PC-9 (cell line): ENCODE measurements at regions of chr7 and their contacts with region 1.

Region 1: DNA sequence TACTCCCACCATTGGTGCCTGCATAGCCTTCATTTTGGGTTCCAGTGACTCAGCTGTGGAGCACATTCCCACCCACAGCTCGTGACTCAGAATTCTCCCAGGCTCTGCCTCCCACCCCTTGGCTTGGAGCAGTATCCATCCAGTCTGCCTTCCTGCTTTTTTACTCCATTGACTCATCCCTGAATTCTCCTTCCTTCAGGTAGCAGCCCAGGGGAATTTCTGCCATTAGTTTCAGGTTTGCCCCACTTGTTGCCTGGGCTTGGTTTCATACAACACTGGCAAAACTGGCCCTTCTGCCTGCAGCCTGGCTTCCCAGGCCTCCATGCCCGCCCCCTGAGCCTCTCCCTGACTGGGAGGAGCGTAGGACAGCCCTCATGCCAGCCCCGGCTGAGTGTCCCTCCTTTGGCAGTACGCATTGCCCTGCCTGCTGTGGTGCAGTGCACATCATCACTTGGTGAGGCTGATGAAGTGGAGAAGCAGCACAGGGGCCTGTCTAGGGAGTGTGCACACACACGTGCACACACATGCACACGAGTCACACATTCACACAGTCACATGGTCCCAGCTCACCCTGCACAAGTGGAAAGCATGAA is 55.0 kb downstream of the SNX10 start:
- DNase-seq: peak; percentile 91 to 94
- H3K4me3 ChIP-seq: no peak overlapping the region
- H3K27ac ChIP-seq: peak overlapping the region; percentile 86
- H3K4me1 ChIP-seq: peaks cover 42% of the 10 kb centered on the region
- H3K27me3 ChIP-seq: no peaks in the 10 kb centered on the region
- CTCF ChIP-seq: no peak

Region 2: DNA sequence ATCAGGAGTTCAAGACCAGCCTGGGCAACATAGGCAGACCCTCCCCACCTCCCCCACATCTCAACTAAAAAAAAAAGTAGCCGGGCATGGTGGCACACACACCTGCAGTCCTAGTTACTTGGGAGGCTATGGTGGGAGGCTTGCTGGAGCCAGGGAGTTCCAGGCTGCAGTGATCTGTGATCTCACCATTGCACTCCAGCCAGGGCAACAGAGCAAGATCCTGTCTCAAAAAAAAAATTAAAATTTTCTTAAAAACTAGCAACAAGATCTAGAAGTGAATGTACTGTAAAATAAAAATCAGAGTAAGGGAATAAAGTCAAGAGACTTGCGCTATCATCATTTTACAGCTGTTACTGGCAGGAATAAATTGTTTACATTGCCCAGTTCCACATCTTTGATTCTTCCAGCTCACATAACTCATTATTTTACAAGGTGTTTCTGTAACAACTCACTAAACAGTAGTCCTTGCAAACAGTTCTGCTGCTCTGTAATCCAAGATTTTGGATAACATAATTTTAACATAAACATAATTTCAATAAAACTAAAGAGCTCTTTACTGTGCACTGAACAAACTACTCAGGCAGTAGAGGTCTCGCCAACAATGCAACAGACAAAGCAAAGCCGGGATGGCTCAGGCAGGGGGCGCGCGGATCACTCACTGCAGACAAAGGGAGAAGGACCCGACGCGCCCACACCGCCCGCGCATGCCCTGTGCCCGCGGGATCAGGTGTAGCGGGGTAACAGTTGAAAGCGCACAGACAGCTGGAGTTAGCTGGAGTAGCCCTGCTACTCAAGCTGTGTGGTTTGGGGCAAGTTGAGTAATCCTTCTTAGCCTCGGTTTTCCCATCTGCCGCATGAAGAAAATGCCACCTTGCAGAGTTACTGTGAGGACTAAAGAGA is 268.0 kb before region 1 on chr7:
- CTCF ChIA-PET with region 1: no interaction called
- POLR2A ChIA-PET with region 1: no interaction called
- intact Hi-C with region 1: loop called (anchors 5 kb)
- DNase-seq: peak in 1 of 2 experiments; percentile 51
- H3K4me3 ChIP-seq: no peak overlapping the region
- H3K27ac ChIP-seq: no peak overlapping the region
- H3K4me1 ChIP-seq: peaks cover 37% of the 10 kb centered on the region
- H3K27me3 ChIP-seq: no peaks in the 10 kb centered on the region
- CTCF ChIP-seq: no peak

Region 3: DNA sequence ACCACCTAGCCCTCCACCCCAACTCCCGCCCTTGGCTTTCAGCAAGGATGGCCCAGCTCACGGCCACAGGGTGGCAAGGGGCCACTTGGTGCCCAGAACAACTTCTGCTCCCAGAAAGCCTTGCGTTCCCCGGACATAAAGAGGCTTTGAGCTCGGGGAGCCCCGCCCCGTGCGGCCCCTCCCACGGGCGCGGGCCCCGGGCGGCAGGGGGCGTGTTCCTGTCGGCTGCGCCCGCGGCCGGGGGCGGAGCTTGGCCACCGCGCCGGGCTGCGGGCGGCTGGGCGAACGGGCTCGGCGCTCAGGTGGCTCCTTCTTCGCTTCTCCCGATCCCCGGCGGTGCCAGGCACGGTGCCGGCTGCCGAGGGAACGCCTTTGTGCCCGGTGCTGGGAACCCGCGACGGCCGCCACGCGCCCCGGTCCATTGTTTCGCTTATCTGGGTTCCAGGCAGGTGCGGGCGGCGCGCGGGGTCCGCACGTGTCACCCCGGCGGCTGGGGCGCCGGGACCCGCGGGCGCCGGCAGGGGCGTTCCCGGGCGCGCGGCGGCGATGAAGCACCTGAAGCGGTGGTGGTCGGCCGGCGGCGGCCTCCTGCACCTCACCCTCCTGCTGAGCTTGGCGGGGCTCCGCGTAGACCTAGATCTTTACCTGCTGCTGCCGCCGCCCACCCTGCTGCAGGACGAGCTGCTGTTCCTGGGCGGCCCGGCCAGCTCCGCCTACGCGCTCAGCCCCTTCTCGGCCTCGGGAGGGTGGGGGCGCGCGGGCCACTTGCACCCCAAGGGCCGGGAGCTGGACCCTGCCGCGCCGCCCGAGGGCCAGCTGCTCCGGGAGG is 194.5 kb before region 1 on chr7 and contains the start of gene NFE2L3:
- CTCF ChIA-PET with region 1: interaction called, 10 read pairs
- POLR2A ChIA-PET with region 1: interaction called, 5 read pairs
- intact Hi-C with region 1: loop called (anchors 2 kb)
- DNase-seq: peak; percentile 69 to 92
- H3K4me3 ChIP-seq: peak within 1 kb of the TSS; percentile 77
- H3K27ac ChIP-seq: peak within 1 kb of the TSS; percentile 96
- H3K4me1 ChIP-seq: peaks cover 33% of the 10 kb centered on the region
- H3K27me3 ChIP-seq: no peaks in the 10 kb centered on the region
- CTCF ChIP-seq: no peak; the same call in 1 of the 2 replicates
- total RNA-seq, gene NFE2L3: 44.2 and 49.1 TPM in 2 replicates

Region 4: GRCh38 chr7:26291699-26292538 is 54.8 kb before region 1 on chr7 and contains the start of gene SNX10:
- CTCF ChIA-PET with region 1: no interaction called
- POLR2A ChIA-PET with region 1: no interaction called
- intact Hi-C with region 1: loop called (anchors 5 kb)
- DNase-seq: peak; percentile 59 to 76
- H3K4me3 ChIP-seq: peak within 1 kb of the TSS; percentile 88
- H3K27ac ChIP-seq: no peak within 1 kb of the TSS
- H3K4me1 ChIP-seq: peaks cover 13% of the 10 kb centered on the region
- H3K27me3 ChIP-seq: no peaks in the 10 kb centered on the region
- CTCF ChIP-seq: peak; percentile 61; the same call in 1 of the 2 replicates
- total RNA-seq, gene SNX10: 9.1 and 9.8 TPM in 2 replicates

Region 5: DNA sequence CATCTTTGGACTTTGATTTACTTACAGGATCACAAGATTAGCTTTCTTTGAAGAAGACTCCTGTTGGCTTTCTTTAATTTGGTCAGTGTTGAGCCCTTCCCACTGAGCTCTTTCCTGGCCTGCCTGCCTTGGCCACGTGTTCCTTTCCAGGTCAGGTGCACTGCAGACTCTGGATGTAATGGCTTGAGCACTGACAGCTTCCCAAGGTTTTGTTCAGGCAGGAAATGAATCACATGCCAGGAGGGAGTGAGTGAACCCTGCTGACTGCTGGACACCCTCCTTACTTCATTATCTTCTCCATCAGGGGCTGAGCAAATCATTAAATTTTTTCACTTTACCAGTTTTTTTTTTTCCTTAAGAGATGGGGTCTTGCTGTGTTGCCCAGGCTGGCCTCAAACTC is 25.3 kb before region 1 on chr7:
- CTCF ChIA-PET with region 1: no interaction called
- POLR2A ChIA-PET with region 1: no interaction called
- intact Hi-C with region 1: no loop called
- DNase-seq: no peak
- H3K4me3 ChIP-seq: no peak overlapping the region
- H3K27ac ChIP-seq: no peak overlapping the region
- H3K4me1 ChIP-seq: no peaks in the 10 kb centered on the region
- H3K27me3 ChIP-seq: no peaks in the 10 kb centered on the region
- CTCF ChIP-seq: no peak

Region 6: GRCh38 chr7:27533652-27534081 is 1187.0 kb after region 1 on chr7:
- CTCF ChIA-PET with region 1: no interaction called
- POLR2A ChIA-PET with region 1: no interaction called
- intact Hi-C with region 1: no loop called
- DNase-seq: no peak
- H3K4me3 ChIP-seq: no peak overlapping the region
- H3K27ac ChIP-seq: no peak overlapping the region
- H3K4me1 ChIP-seq: no peaks in the 10 kb centered on the region
- H3K27me3 ChIP-seq: no peaks in the 10 kb centered on the region
- CTCF ChIP-seq: no peak